Gastrocnemius medialis (tissue), 4 donors: ENCODE measurements at regions of chr9 and their contacts with region 1.

Region 1: GRCh38 chr9:131762356-131762932 is 22.6 kb upstream of the RAPGEF1 start:
- DNase-seq: peak; percentile 21 to 47
- ATAC-seq: peak; percentile 68 to 81
- H3K4me3 ChIP-seq: peak overlapping the region in 1 of 4 donors; percentile 22
- H3K27ac ChIP-seq: no peak overlapping the region
- H3K4me1 ChIP-seq: no peaks in the 10 kb centered on the region
- H3K27me3 ChIP-seq: peaks cover 0 to 3% (median 0%) of the 10 kb centered on the region in 3 donors
- CTCF ChIP-seq: peak; percentile 92 to 98 (median 96)
- POLR2A ChIP-seq: no peak

Region 2: GRCh38 chr9:131645078-131645776 is 117.2 kb before region 1 on chr9:
- in situ Hi-C with region 1: no loop called
- intact Hi-C with region 1: no loop called
- DNase-seq: no peak
- ATAC-seq: peak; percentile 53 to 70
- H3K4me3 ChIP-seq: no peak overlapping the region
- H3K27ac ChIP-seq: peak overlapping the region; percentile 69 to 83 (median 74)
- H3K4me1 ChIP-seq: peaks cover 39 to 41% of the 10 kb centered on the region in 2 donors
- H3K27me3 ChIP-seq: no peaks in the 10 kb centered on the region
- CTCF ChIP-seq: no peak
- POLR2A ChIP-seq: no peak

Region 3: DNA sequence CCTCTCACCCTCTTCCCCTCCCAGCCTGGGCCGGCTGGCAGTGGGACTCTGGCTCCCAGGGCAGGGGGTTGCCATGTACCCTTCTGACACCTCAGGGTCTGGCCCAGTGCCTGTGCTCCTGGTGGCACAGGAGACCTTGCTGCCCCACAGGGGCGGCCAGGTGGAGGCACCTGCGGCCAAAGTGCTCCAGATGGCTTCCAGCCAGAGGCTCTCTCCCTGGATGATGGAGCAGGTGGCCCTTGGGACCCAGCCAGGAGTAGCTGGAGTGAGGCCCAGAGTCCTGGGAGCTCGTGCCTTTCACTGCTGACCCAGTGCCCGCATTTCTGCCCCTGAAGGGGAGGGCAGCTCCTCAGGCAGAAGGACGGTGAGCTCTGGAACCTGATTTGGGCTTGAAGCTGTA is 486.7 kb after region 1 on chr9:
- in situ Hi-C with region 1: loop called (anchors 5 kb)
- intact Hi-C with region 1: loop called (anchors 1 kb)
- DNase-seq: no peak
- ATAC-seq: no peak
- H3K4me3 ChIP-seq: no peak overlapping the region
- H3K27ac ChIP-seq: no peak overlapping the region
- H3K4me1 ChIP-seq: no peaks in the 10 kb centered on the region
- H3K27me3 ChIP-seq: peaks cover 0 to 12% (median 0%) of the 10 kb centered on the region in 3 donors
- CTCF ChIP-seq: no peak
- POLR2A ChIP-seq: no peak